ENCODE measurements at regions of chr6 and their contacts with region 1.

Region 1: DNA sequence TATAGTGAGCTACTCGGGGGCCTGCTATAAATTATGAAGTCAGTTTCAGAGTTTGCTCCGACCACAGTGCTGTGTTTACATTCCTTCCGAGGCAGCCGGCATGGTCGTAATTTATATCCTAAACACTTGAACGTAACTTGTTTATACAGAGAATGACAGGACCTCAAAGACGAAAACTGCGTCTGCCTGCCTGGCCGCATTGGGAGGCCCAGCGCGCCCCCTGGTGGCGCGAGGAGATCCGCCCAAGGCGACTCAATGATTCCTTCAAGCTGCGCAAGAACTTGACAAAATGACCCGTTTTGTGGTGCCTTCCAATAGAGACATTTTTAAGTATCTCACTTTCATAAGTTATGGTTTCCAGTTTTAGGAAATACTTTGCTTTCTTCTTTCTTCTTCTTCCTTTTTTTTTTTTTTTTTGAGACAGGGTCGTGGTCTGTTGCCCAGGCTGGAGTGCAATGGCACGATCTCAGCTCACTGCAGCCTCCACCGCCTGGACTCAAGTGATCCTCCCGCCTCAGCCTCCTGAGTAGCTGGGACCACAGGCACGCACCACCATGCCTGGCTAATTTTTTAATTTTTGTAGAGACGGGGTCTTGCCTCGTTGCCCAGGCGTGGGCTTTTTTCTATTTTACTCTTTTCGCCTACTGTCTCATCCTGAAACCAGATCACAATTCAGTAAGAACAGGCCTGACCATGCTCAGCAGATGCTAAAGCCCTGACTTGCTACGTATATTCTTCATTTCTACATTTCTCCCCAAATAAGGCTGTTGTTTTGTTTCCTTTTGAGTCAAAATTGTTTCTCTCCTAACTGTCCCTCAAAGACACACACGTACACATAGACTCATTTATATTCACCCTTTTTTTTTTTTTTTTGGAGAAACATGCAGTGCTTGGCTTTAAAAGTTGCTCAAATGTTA is 7.8 kb downstream of the FOXF2 start:
- DNase-seq: peak; percentile 75
- H3K4me3 Mint-ChIP-seq: no peak overlapping the region
- H3K27ac Mint-ChIP-seq: peak overlapping the region; percentile 69
- H3K4me1 Mint-ChIP-seq: peaks cover 9% of the 10 kb centered on the region
- H3K27me3 Mint-ChIP-seq: no peaks in the 10 kb centered on the region
- CTCF ChIP-seq: peak; percentile 89

Region 2: GRCh38 chr6:188821-189655 is 1208.2 kb before region 1 on chr6:
- CTCF ChIA-PET with region 1: interaction called, 3 read pairs
- POLR2A ChIA-PET with region 1: no interaction called
- intact Hi-C with region 1: loop called (anchors 5 kb)
- DNase-seq: peak; percentile 97
- H3K4me3 Mint-ChIP-seq: no peak overlapping the region
- H3K27ac Mint-ChIP-seq: peak overlapping the region; percentile 69
- H3K4me1 Mint-ChIP-seq: peaks cover 18% of the 10 kb centered on the region
- H3K27me3 Mint-ChIP-seq: no peaks in the 10 kb centered on the region
- CTCF ChIP-seq: peak; percentile 92

Region 3: GRCh38 chr6:797479-798077 is 599.6 kb before region 1 on chr6:
- CTCF ChIA-PET with region 1: interaction called, 10 read pairs
- POLR2A ChIA-PET with region 1: interaction called, 3 read pairs
- intact Hi-C with region 1: loop called (anchors 1 kb)
- DNase-seq: peak; percentile 68
- H3K4me3 Mint-ChIP-seq: no peak overlapping the region
- H3K27ac Mint-ChIP-seq: no peak overlapping the region
- H3K4me1 Mint-ChIP-seq: no peaks in the 10 kb centered on the region
- H3K27me3 Mint-ChIP-seq: peaks cover 40% of the 10 kb centered on the region
- CTCF ChIP-seq: peak; percentile 83

Region 4: DNA sequence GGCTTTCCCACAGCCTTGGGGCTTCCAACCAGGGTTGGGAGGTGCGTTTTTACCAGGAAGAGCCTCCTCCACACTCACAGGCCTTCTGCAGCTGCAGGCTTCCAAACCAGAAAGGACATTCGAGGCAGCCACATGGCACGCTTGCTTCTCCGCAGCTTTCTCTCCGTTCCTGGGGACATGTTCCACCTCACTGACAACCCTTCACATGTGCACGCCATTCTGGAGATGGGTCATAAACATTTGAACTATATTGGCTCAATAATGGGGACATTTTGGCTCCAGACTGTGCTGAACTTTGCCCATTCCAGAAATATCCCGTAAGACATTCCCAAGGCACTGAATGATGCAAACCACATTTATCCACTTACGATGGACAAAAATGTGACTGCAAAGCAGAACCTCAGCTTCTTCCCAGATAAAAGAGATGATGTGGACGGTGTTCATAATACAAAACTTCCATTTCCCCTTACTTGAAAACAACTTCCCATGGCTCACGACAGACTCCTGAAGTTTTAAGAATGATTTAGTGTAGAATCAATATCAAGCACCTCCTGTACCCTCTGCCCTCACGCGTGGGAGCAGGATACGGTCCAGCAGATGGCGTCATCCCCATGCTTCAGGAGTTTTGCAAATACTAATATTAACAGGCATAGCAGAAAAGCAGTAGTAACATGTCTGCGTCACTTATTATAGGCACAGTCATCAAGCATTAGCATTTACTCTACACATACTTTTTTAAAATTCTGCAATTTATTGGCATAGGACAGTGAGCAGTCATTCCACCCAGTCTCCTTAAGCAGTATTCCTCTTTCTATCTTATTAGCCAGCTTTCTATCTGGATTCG is 33.3 kb before region 1 on chr6:
- CTCF ChIA-PET with region 1: no interaction called
- POLR2A ChIA-PET with region 1: no interaction called
- intact Hi-C with region 1: loop called (anchors 1 kb)
- DNase-seq: peak; percentile 33
- H3K4me3 Mint-ChIP-seq: no peak overlapping the region
- H3K27ac Mint-ChIP-seq: no peak overlapping the region
- H3K4me1 Mint-ChIP-seq: no peaks in the 10 kb centered on the region
- H3K27me3 Mint-ChIP-seq: no peaks in the 10 kb centered on the region
- CTCF ChIP-seq: peak; percentile 42

Region 5: GRCh38 chr6:1436334-1437306 is 39.4 kb after region 1 on chr6:
- CTCF ChIA-PET with region 1: interaction called, 6 read pairs
- POLR2A ChIA-PET with region 1: no interaction called
- intact Hi-C with region 1: loop called (anchors 2 kb)
- DNase-seq: peak; percentile 78
- H3K4me3 Mint-ChIP-seq: no peak overlapping the region
- H3K27ac Mint-ChIP-seq: no peak overlapping the region
- H3K4me1 Mint-ChIP-seq: peaks cover 19% of the 10 kb centered on the region
- H3K27me3 Mint-ChIP-seq: peaks cover 10% of the 10 kb centered on the region
- CTCF ChIP-seq: peak; percentile 84

Region 6: DNA sequence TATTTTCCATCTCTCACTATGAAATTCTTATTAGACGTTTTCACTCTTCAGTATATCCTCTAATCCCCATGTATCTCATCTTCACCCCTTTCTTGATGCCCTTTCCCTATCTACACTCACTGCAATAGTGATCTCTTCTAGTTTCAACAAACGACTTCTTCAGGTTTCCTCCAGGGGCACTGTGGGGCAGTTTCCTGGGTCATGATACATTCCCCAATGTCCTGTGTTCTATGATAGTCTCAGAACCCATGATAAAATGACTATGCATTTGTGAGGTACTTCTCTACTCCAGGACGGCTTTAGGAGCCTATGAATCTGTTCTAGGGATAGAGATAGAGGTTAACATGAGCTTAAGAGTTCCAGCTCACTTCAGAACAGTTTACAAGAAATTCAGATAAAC is 395.8 kb after region 1 on chr6:
- CTCF ChIA-PET with region 1: no interaction called
- POLR2A ChIA-PET with region 1: no interaction called
- intact Hi-C with region 1: no loop called
- DNase-seq: peak; percentile 62
- H3K4me3 Mint-ChIP-seq: no peak overlapping the region
- H3K27ac Mint-ChIP-seq: no peak overlapping the region
- H3K4me1 Mint-ChIP-seq: peaks cover 3% of the 10 kb centered on the region
- H3K27me3 Mint-ChIP-seq: no peaks in the 10 kb centered on the region
- CTCF ChIP-seq: peak; percentile 33

Measured in MCF 10A (cell line).